HCT116 (cell line): ENCODE measurements at regions of chr17 and their contacts with region 1.

Region 1: GRCh38 chr17:61097781-61098180 is 301.9 kb upstream of the TBX2 start:
- DNase-seq: no peak
- ATAC-seq: no peak
- H3K4me3 ChIP-seq: no peak overlapping the region
- H3K27ac ChIP-seq: no peak overlapping the region
- H3K4me1 ChIP-seq: no peaks in the 10 kb centered on the region
- H3K27me3 ChIP-seq: no peaks in the 10 kb centered on the region
- CTCF ChIP-seq: no peak
- POLR2A ChIP-seq: no peak
- RAD21 ChIP-seq: no peak

Region 2: GRCh38 chr17:61037822-61038221 is 60.0 kb before region 1 on chr17:
- CTCF ChIA-PET with region 1: no interaction called
- POLR2A ChIA-PET with region 1: no interaction called
- RAD21 ChIA-PET with region 1: no interaction called
- intact Hi-C with region 1: loop called (anchors 10 kb)
- DNase-seq: no peak
- ATAC-seq: no peak
- H3K4me3 ChIP-seq: no peak overlapping the region
- H3K27ac ChIP-seq: no peak overlapping the region
- H3K4me1 ChIP-seq: no peaks in the 10 kb centered on the region
- H3K27me3 ChIP-seq: no peaks in the 10 kb centered on the region
- CTCF ChIP-seq: no peak
- POLR2A ChIP-seq: no peak
- RAD21 ChIP-seq: no peak